ENCODE measurements at regions of chr3 and their contacts with region 1.

Region 1: DNA sequence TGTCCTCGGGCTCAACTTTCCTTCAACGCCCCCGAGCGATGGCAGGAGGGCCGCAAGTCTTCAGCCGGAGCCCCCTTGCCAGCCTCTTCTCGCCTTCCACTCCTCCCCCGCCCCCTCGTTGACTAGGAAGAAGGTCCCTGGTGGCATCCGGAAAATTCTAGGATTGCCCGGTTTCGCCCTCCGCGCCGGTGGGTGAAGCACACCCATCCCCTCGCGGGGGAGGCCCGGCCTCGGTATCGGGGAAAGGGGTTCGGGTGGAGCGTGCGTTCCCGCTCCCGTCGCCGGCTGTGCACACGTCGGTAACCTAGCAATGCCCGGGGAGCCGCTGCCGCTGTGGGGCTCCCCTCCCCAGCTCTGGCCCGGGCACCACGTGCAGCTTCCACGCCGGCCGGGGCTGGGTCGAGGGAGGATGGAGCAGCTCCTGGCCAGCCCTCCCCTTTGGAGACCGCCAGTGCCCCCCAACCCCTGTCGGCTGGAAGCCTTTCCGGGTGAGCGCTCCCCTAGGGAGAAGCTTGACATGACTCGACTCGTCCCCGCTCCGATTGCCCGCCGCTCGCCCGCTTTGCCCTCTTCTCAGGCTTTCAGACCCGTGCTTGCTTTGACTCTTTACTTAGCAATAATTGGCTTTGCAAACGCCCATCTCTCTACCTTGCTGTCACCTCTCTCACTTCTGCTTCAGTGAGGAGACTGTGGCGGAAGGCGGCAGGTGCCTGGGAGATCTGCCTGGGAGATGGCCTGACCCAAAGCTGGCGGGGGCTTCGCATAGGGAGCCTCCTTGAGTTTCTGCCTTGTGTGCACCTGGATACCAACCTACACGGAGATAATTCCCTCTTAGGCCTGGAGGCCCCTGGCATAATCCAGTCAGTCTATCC is 1.3 kb downstream of the CACNA1D start:
- DNase-seq: peak; percentile 11
- H3K4me3 Mint-ChIP-seq: no peak overlapping the region
- H3K27ac Mint-ChIP-seq: no peak overlapping the region
- H3K4me1 Mint-ChIP-seq: peaks cover 13% of the 10 kb centered on the region
- H3K27me3 Mint-ChIP-seq: peaks cover 42% of the 10 kb centered on the region

Region 2: GRCh38 chr3:53375019-53375418 is 120.7 kb before region 1 on chr3:
- CTCF ChIA-PET with region 1: no interaction called
- POLR2A ChIA-PET with region 1: no interaction called
- intact Hi-C with region 1: loop called (anchors 5 kb)
- DNase-seq: peak; percentile 75
- H3K4me3 Mint-ChIP-seq: no peak overlapping the region
- H3K27ac Mint-ChIP-seq: no peak overlapping the region
- H3K4me1 Mint-ChIP-seq: no peaks in the 10 kb centered on the region
- H3K27me3 Mint-ChIP-seq: peaks cover 22% of the 10 kb centered on the region

Region 3: GRCh38 chr3:53478166-53478830 is 17.5 kb before region 1 on chr3:
- CTCF ChIA-PET with region 1: no interaction called
- POLR2A ChIA-PET with region 1: no interaction called
- intact Hi-C with region 1: no loop called
- DNase-seq: no peak
- H3K4me3 Mint-ChIP-seq: no peak overlapping the region
- H3K27ac Mint-ChIP-seq: no peak overlapping the region
- H3K4me1 Mint-ChIP-seq: no peaks in the 10 kb centered on the region
- H3K27me3 Mint-ChIP-seq: peaks cover 30% of the 10 kb centered on the region

Measured in activated CD4-positive, alpha-beta memory T cell treated with anti-CD3 and anti-CD28 coated beads for 36 hours (primary cell).